ENCODE measurements at regions of chr22 and their contacts with region 1.

Region 1: GRCh38 chr22:38872172-38872830 is at the start of gene CBX6:
- DNase-seq: no peak
- H3K4me3 ChIP-seq: peak within 1 kb of the TSS; percentile 72
- H3K27me3 ChIP-seq: no peaks in the 10 kb centered on the region
- CTCF ChIP-seq: no peak
- polyA plus RNA-seq, gene CBX6: 15.4 and 21.9 TPM in 2 replicates

Region 2: GRCh38 chr22:38843201-38843715 is 29.0 kb before region 1 on chr22:
- CTCF ChIA-PET with region 1: interaction called, 21 read pairs
- POLR2A ChIA-PET with region 1: no interaction called
- DNase-seq: no peak
- H3K4me3 ChIP-seq: peak overlapping the region; percentile 30
- H3K27me3 ChIP-seq: peaks cover 22% of the 10 kb centered on the region
- CTCF ChIP-seq: peak; percentile 26

Region 3: DNA sequence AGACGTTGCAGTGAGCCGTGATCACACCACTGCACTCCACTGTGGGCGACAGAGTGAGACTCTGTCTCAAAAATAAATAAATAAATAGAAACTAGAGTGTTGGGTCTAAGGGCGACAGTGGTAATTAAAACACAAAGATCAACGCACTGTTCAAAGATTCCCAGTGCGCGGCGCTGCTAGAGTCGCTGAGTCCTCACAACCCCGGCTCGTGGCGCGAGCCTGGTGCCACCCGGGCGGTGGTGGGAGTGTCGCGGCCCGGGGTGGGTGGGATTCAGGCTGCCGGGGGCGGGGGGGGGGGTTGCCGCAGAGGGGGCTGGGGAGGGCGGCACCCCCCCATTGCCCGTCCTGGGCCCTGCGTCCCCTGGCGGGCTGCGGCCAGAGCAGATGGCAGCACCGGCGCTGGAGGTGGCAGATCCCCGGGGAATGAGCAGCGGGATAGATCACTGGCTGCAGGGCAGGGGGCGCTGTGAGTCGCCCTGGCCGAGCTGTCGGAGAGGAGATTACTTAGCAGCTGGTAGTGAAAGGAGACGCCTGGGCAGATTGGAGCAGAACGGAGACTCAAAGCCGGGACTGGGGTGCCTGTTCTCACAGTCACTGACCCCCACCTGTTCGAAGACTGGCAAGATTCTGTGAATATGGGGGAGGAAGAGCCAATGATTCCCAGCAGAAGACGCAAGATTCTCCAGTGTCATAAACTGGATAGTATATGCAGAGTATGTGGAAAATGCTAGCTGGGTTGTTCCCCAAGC is 54.9 kb after region 1 on chr22:
- CTCF ChIA-PET with region 1: interaction called, 50 read pairs
- POLR2A ChIA-PET with region 1: no interaction called
- DNase-seq: no peak
- H3K4me3 ChIP-seq: peak overlapping the region; percentile 18
- H3K27me3 ChIP-seq: peaks cover 2% of the 10 kb centered on the region; the same call in 1 of the 2 replicates
- CTCF ChIP-seq: peak; percentile 88

Region 4: GRCh38 chr22:38950527-38951295 is 78.4 kb after region 1 on chr22:
- CTCF ChIA-PET with region 1: interaction called, 19 read pairs
- POLR2A ChIA-PET with region 1: no interaction called
- DNase-seq: no peak
- H3K4me3 ChIP-seq: no peak overlapping the region
- H3K27me3 ChIP-seq: peaks cover 25% of the 10 kb centered on the region
- CTCF ChIP-seq: no peak

Region 5: DNA sequence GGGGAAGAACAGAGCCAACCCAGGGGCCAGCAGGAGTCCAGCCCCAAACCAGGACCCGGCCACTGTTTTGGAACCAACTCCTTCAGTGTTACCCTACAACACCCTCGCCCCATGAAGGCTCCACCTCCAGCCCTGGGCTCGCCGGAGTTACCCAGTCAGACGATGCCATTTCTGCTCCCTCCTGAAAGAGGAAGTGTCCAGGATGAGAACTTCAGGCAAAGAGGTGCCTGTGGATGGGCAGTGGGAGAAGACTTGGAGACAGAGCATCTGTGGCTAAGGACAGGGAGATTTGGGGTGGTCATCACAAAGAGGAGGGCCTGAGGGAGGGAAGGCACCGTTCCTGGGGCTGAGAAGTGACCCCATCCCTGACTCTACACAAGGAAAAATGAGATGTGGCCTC is 123.8 kb after region 1 on chr22:
- CTCF ChIA-PET with region 1: interaction called, 136 read pairs
- POLR2A ChIA-PET with region 1: no interaction called
- DNase-seq: no peak
- H3K4me3 ChIP-seq: no peak overlapping the region
- H3K27me3 ChIP-seq: peaks cover 5% of the 10 kb centered on the region
- CTCF ChIP-seq: no peak

Region 6: GRCh38 chr22:39013942-39014722 is 141.8 kb after region 1 on chr22 and contains the start of gene APOBEC3C:
- CTCF ChIA-PET with region 1: interaction called, 136 read pairs
- POLR2A ChIA-PET with region 1: no interaction called
- DNase-seq: peak; percentile 52
- H3K4me3 ChIP-seq: peak within 1 kb of the TSS; percentile 71
- H3K27me3 ChIP-seq: no peaks in the 10 kb centered on the region
- CTCF ChIP-seq: no peak
- polyA plus RNA-seq, gene APOBEC3C: 20.4 and 20.9 TPM in 2 replicates

Measured in BJ (cell line).